ENCODE measurements at regions of chr1 and their contacts with region 1.

Region 1: DNA sequence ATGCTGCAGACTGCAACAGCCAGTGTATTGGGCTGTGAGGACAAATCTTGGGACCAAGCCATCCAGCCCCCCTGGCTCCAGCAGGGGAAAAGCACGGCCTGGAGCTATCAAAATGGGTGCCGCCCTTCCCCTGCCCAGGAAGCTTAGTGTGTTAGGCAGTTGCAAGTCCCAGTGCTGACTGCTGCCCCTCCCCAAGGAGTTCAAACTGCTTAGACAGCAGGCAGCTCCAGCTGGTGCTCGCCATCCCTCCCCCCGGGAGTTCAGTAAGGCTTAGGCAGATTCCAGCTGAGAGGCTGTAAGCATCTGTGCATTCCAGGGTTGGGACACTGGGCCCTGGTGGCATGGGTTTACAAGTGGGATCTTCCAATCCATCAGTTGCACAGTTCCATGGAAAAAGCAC is 579.6 kb upstream of the NR5A2 start:
- DNase-seq: no peak
- ATAC-seq: 0 out of 2 replicates have a peak, but pooled peaks have one; percentile 37
- H3K4me3 ChIP-seq: no peak overlapping the region
- H3K27ac ChIP-seq: no peak overlapping the region
- H3K4me1 ChIP-seq: no peaks in the 10 kb centered on the region; the same call in 1 of the 2 replicates
- H3K27me3 ChIP-seq: no peaks in the 10 kb centered on the region
- CTCF ChIP-seq: no peak
- POLR2A ChIP-seq: no peak
- RAD21 ChIP-seq: no peak

Region 2: DNA sequence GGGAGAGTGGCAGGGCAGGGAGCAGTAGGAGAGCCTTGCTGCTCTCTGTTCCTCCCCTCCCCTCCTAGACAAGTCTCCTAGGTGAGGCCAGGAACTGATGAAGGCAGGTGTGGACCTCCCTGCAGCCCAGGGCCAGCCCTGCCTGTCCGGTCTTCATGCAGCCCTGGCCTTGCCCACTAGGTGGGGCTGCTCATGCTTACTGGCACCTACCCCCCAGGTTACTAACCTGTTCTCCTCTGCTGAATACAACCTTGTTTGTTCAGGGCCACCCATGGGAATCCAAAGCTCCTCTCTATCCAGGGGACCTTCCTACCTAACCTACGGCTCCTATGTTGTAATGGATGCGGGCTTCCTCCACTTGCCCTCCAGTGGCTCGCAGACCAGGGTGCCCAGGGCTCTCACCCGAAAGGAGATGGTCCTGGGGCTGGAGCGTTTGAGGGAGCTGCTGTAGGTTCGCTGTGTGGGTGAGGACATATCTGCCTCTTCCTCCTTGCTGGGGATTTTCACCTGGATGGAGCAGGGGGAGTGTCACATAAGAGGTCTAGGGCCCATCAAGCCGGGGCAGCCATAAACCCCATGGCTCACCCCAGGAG is 1937.5 kb after region 1 on chr1:
- CTCF ChIA-PET with region 1: no interaction called
- POLR2A ChIA-PET with region 1: no interaction called
- dilution Hi-C with region 1: no loop called
- in situ Hi-C with region 1: no loop called
- intact Hi-C with region 1: loop called (anchors 10 kb)
- DNase-seq: peak; percentile 19
- ATAC-seq: no peak
- H3K4me3 ChIP-seq: no peak overlapping the region
- H3K27ac ChIP-seq: no peak overlapping the region
- H3K4me1 ChIP-seq: peaks cover 20% of the 10 kb centered on the region
- H3K27me3 ChIP-seq: peaks cover under 1% of the 10 kb centered on the region
- CTCF ChIP-seq: peak; percentile 66
- POLR2A ChIP-seq: no peak
- RAD21 ChIP-seq: peak; percentile 50